Activated CD4-positive, alpha-beta memory T cell treated with anti-CD3 and anti-CD28 coated beads for 36 hours (primary cell): ENCODE measurements at regions of chr4 and their contacts with region 1.

Region 1: DNA sequence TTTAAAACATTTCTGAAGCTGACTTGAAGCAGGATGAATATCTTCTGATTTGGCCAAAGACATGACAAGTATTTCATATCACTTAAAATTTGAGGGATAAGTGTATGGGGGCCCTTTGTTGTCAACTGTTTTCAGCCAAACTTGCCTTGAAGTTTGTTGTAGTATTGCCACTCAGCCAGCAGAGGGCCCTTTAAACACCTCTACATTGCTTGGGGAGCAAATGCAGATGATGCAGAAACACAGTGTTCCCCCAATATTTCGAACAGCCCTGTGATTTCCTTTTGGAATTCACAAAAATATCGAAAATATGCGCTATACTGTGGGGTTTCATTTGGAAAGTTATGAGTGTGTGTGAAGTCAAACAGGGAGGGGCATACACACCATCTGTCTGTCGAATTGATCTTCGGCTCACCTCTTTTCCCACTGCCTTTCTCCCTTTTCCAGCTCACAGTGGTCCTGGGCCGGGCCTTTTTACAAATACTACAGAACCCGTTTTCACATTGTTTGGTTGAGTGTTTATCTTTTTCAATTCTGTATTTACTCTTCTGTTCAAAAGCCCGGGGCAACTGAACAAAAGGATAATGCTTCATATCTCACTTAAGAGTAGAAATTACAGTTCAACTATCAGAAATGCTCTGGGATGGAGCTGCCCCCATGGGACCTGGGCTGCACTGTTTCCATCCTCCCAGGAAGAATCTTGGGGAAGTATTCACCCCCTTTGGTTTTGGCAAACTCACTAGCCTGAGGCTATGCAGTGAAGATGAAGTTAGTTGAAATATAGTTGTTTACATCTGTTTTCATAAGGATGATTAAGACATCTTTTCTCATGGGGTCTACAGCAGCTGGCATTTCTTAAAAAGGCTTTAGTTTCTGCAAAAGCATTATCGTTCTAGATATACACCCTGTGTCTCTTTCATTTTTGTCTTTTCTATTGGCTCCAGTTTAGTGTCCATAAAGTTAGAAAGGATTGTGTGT is 137.6 kb downstream of the EGF start:
- DNase-seq: peak; percentile 56
- H3K4me3 Mint-ChIP-seq: no peak overlapping the region
- H3K27ac Mint-ChIP-seq: no peak overlapping the region
- H3K4me1 Mint-ChIP-seq: peaks cover under 1% of the 10 kb centered on the region
- H3K27me3 Mint-ChIP-seq: no peaks in the 10 kb centered on the region

Region 2: DNA sequence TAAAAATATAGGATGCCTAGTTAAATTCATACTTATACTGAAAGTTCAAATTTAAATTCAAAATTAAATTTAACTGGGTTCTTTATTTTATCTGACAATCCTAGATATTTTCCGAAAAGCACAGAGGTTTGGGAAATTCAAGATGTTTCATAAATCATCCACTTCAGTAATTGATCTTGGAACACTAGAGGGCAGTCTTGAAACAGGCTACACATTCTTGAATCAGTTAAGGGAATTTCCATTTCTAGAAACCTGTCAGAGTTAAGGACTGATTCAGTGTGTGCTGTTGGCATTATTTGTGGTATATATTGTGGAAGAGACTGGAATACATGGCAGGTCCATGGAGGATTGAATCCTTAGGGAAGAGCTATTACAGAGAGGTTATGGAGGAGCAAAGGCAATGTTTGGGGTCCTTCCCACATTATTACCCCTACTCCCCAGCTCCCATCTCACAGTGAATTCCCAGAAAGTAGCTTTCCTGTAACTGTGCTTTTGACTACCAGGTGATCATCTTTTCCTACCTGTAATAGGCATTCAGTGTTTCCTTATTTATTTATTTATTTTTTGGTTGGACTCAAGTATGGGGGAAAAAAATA is 44.7 kb before region 1 on chr4:
- CTCF ChIA-PET with region 1: interaction called, 5 read pairs
- POLR2A ChIA-PET with region 1: no interaction called
- intact Hi-C with region 1: loop called (anchors 2 kb)
- DNase-seq: no peak
- H3K4me3 Mint-ChIP-seq: no peak overlapping the region
- H3K27ac Mint-ChIP-seq: no peak overlapping the region
- H3K4me1 Mint-ChIP-seq: peaks cover 6% of the 10 kb centered on the region
- H3K27me3 Mint-ChIP-seq: no peaks in the 10 kb centered on the region

Region 3: GRCh38 chr4:110034026-110034393 is 16.2 kb before region 1 on chr4:
- CTCF ChIA-PET with region 1: interaction called, 10 read pairs
- POLR2A ChIA-PET with region 1: no interaction called
- intact Hi-C with region 1: no loop called
- DNase-seq: no peak
- H3K4me3 Mint-ChIP-seq: no peak overlapping the region
- H3K27ac Mint-ChIP-seq: no peak overlapping the region
- H3K4me1 Mint-ChIP-seq: no peaks in the 10 kb centered on the region
- H3K27me3 Mint-ChIP-seq: peaks cover 22% of the 10 kb centered on the region

Region 4: GRCh38 chr4:110099638-110100037 is 49.4 kb after region 1 on chr4:
- CTCF ChIA-PET with region 1: no interaction called
- POLR2A ChIA-PET with region 1: no interaction called
- intact Hi-C with region 1: no loop called
- DNase-seq: no peak
- H3K4me3 Mint-ChIP-seq: no peak overlapping the region
- H3K27ac Mint-ChIP-seq: no peak overlapping the region
- H3K4me1 Mint-ChIP-seq: no peaks in the 10 kb centered on the region
- H3K27me3 Mint-ChIP-seq: no peaks in the 10 kb centered on the region

Region 5: GRCh38 chr4:110165382-110166285 is 115.4 kb after region 1 on chr4:
- CTCF ChIA-PET with region 1: interaction called, 10 read pairs
- POLR2A ChIA-PET with region 1: no interaction called
- intact Hi-C with region 1: no loop called
- DNase-seq: peak; percentile 81
- H3K4me3 Mint-ChIP-seq: peak overlapping the region; percentile 33
- H3K27ac Mint-ChIP-seq: peak overlapping the region; percentile 93
- H3K4me1 Mint-ChIP-seq: peaks cover 30% of the 10 kb centered on the region
- H3K27me3 Mint-ChIP-seq: no peaks in the 10 kb centered on the region

Region 6: DNA sequence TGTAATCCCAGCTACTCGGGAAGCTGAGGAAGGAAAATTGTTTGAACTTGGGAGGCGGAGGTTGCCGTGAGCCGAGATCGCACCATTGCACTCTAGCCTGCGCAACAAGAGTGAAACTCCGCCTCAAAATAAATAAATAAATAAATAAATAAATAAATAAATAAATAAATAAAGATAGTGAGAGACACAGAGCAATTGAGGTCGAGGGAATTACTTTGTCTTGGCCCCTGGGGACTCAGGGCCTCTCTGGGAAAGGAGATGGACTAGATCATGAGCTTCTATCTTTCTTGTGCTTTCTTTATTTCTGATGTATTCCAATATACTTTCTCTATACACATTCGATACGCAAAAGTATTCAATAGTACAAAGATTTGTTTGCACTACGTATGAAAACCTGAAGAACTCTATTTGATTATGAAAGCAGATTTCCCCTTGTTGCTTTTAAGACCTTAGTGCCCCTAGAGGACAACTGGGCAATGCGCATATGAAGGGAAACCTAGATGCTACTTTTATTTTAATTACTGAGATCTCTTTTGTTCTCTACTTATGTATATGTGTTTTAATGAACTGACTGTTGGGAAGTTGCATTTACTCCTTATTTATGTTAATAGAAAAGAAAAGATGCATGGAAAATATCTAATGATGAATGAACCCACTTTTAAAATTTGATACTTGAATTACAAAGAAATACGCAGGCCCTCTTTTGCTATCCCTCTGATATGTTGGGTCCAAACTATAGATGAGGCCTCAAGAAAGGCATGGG is 160.9 kb after region 1 on chr4:
- CTCF ChIA-PET with region 1: interaction called, 9 read pairs
- POLR2A ChIA-PET with region 1: no interaction called
- intact Hi-C with region 1: loop called (anchors 1 kb)
- DNase-seq: peak; percentile 13
- H3K4me3 Mint-ChIP-seq: no peak overlapping the region
- H3K27ac Mint-ChIP-seq: no peak overlapping the region
- H3K4me1 Mint-ChIP-seq: peaks cover 2% of the 10 kb centered on the region
- H3K27me3 Mint-ChIP-seq: peaks cover 2% of the 10 kb centered on the region

Region 7: GRCh38 chr4:110510955-110511544 is 460.8 kb after region 1 on chr4:
- CTCF ChIA-PET with region 1: interaction called, 115 read pairs
- POLR2A ChIA-PET with region 1: no interaction called
- intact Hi-C with region 1: loop called (anchors 1 kb)
- DNase-seq: no peak
- H3K4me3 Mint-ChIP-seq: no peak overlapping the region
- H3K27ac Mint-ChIP-seq: no peak overlapping the region
- H3K4me1 Mint-ChIP-seq: peaks cover 9% of the 10 kb centered on the region
- H3K27me3 Mint-ChIP-seq: no peaks in the 10 kb centered on the region

Region 8: GRCh38 chr4:110516106-110516922 is 466.1 kb after region 1 on chr4:
- CTCF ChIA-PET with region 1: interaction called, 115 read pairs
- POLR2A ChIA-PET with region 1: no interaction called
- intact Hi-C with region 1: no loop called
- DNase-seq: peak; percentile 78
- H3K4me3 Mint-ChIP-seq: peak overlapping the region; percentile 91
- H3K27ac Mint-ChIP-seq: peak overlapping the region; percentile 74
- H3K4me1 Mint-ChIP-seq: peaks cover 12% of the 10 kb centered on the region
- H3K27me3 Mint-ChIP-seq: peaks cover 2% of the 10 kb centered on the region